ENCODE measurements at regions of chr5 and their contacts with region 1.

Region 1: DNA sequence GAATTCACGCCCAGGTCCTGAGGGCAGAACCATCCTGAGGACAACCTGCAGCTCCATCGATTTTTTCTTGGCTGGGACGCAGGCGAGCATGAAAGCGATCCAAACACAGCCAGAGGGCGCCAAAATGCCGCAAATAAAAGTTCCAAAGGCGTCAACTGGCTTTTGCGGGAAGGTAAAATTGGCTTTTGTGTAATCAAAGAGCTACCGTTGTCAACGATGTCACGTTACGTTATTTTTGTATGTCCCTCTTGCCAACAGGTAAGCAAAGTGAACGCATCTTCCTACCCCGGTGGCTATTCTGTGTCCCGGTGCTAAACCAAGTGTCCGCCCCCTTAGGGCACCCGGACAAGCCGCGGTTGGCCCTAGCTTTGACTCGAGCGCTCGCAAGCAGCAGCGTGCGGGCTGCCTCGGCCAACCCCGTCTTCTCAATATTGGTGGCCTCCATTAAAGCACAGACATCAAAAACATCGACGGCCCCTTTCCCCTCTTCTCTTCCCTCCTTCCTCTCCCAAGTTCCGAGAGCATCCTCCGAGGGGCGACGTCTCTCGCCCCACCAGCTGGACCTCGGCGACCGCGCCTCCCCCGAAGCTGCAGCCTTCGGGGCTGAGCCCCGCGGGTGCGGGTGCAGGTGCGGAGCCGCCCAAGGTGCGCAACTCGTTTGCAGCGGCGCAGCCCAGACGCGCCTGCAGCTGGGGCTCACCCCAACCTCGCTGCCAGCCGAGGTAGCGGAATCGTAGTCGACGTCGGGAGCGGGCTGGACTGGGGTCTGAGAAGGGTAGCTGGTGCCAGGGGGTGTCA is 1.1 kb upstream of the BASP1 start:
- DNase-seq: peak; percentile 81
- ATAC-seq: peak; percentile 44
- H3K4me3 Mint-ChIP-seq: peak overlapping the region; percentile 87
- H3K27ac Mint-ChIP-seq: no peak overlapping the region; the same call in 1 of the 2 replicates
- H3K4me1 Mint-ChIP-seq: peaks cover 58% of the 10 kb centered on the region
- H3K27me3 Mint-ChIP-seq: no peaks in the 10 kb centered on the region
- CTCF ChIP-seq: peak; percentile 51; the same call in 1 of the 2 replicates

Region 2: GRCh38 chr5:17143335-17143734 is 73.0 kb before region 1 on chr5:
- CTCF ChIA-PET with region 1: no interaction called
- POLR2A ChIA-PET with region 1: no interaction called
- DNase-seq: no peak
- ATAC-seq: no peak
- H3K4me3 Mint-ChIP-seq: no peak overlapping the region
- H3K27ac Mint-ChIP-seq: no peak overlapping the region
- H3K4me1 Mint-ChIP-seq: peaks cover 51% of the 10 kb centered on the region
- H3K27me3 Mint-ChIP-seq: peaks cover 51% of the 10 kb centered on the region
- CTCF ChIP-seq: no peak

Region 3: DNA sequence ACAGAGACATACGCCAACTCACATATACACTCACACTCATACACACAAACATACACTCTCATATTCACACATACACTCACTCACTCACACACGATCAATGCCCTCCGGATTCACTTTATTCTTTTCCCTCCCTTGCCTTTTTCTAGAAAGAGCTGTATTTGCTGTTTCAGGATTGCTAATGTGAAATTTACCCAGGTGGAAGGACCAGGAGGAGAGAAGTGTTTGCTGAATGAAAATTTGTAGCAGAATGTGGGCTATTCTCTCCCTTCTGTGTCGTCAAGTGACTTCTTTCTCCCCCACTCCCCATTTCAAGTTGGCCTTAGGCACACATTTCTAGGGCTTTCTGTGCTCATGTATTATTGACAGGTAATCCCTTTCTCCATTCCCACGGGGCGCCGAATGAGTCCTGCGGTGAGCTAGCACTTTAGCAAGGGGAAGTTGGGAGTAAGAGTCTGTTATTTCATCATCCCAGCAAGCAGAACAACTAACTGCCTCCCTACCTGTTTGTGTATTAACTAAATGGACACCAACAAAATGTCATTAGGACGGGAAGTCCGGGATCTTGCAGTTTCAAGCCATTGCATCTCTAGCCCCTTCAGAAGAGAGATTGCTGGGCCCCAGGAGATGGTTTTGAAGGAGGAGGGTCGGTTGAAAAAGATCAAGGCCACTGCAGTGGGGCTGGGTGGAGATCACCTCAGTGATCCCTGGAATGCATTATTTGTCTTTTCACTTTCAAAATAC is 184.5 kb after region 1 on chr5:
- CTCF ChIA-PET with region 1: interaction called, 27 read pairs
- POLR2A ChIA-PET with region 1: interaction called, 17 read pairs
- DNase-seq: peak; percentile 59
- ATAC-seq: peak; percentile 60
- H3K4me3 Mint-ChIP-seq: peak overlapping the region; percentile 63
- H3K27ac Mint-ChIP-seq: peak overlapping the region; percentile 91
- H3K4me1 Mint-ChIP-seq: peaks cover 70% of the 10 kb centered on the region
- H3K27me3 Mint-ChIP-seq: peaks cover 75% of the 10 kb centered on the region
- CTCF ChIP-seq: no peak

Region 4: GRCh38 chr5:17436761-17437221 is 220.4 kb after region 1 on chr5:
- CTCF ChIA-PET with region 1: interaction called, 26 read pairs
- POLR2A ChIA-PET with region 1: no interaction called
- DNase-seq: no peak
- ATAC-seq: no peak
- H3K4me3 Mint-ChIP-seq: no peak overlapping the region
- H3K27ac Mint-ChIP-seq: no peak overlapping the region
- H3K4me1 Mint-ChIP-seq: peaks cover 25% of the 10 kb centered on the region
- H3K27me3 Mint-ChIP-seq: no peaks in the 10 kb centered on the region
- CTCF ChIP-seq: no peak

Region 5: DNA sequence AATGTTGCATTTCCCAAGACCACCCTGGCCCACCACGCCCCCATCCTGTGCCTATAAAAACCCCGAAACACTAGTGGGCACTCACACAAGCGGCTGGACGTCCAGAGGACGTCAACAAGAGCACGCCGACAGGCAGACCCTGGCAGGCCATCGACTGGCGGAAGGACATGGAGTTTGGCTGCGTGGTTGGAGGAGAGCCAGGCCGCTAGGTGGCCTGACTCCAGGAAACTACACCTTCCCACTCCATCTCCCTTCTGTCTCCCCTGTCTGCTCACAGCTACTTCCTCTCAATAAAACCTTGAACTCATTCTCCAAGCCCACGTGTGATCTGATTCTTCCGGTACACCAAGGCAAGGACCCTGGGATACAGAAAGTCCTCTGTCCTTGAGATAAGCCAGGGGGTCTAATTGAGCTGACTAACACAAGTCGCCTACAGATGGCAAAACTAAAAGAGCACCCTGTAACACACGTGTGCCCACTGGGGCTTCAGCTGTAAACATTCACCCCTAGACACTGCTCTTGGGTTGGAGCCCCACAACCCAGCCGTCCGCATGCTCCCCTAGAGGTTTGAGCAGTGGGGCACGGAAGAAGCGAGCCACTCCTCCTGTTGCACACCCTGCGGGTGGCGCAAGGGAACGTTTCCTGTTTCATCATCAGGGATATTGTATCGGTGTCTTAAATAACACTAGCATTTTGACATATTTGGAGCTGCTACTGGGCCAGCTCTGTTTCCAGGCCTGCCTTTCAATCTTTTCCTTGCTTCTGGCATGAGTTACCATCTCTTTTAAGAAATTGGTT is 227.2 kb after region 1 on chr5:
- CTCF ChIA-PET with region 1: interaction called, 26 read pairs
- POLR2A ChIA-PET with region 1: interaction called, 3 read pairs
- DNase-seq: peak; percentile 27
- ATAC-seq: peak; percentile 91
- H3K4me3 Mint-ChIP-seq: no peak overlapping the region
- H3K27ac Mint-ChIP-seq: no peak overlapping the region
- H3K4me1 Mint-ChIP-seq: peaks cover 13% of the 10 kb centered on the region
- H3K27me3 Mint-ChIP-seq: no peaks in the 10 kb centered on the region
- CTCF ChIP-seq: no peak

Region 6: GRCh38 chr5:18113721-18114120 is 897.3 kb after region 1 on chr5:
- CTCF ChIA-PET with region 1: interaction called, 11 read pairs
- POLR2A ChIA-PET with region 1: no interaction called
- DNase-seq: no peak
- ATAC-seq: no peak
- H3K4me3 Mint-ChIP-seq: no peak overlapping the region
- H3K27ac Mint-ChIP-seq: no peak overlapping the region
- H3K4me1 Mint-ChIP-seq: peaks cover 9% of the 10 kb centered on the region
- H3K27me3 Mint-ChIP-seq: no peaks in the 10 kb centered on the region
- CTCF ChIP-seq: no peak

Measured in WTC11 (cell line).